WTC11 (cell line): ENCODE measurements at regions of chr1 and their contacts with region 1.

Region 1: DNA sequence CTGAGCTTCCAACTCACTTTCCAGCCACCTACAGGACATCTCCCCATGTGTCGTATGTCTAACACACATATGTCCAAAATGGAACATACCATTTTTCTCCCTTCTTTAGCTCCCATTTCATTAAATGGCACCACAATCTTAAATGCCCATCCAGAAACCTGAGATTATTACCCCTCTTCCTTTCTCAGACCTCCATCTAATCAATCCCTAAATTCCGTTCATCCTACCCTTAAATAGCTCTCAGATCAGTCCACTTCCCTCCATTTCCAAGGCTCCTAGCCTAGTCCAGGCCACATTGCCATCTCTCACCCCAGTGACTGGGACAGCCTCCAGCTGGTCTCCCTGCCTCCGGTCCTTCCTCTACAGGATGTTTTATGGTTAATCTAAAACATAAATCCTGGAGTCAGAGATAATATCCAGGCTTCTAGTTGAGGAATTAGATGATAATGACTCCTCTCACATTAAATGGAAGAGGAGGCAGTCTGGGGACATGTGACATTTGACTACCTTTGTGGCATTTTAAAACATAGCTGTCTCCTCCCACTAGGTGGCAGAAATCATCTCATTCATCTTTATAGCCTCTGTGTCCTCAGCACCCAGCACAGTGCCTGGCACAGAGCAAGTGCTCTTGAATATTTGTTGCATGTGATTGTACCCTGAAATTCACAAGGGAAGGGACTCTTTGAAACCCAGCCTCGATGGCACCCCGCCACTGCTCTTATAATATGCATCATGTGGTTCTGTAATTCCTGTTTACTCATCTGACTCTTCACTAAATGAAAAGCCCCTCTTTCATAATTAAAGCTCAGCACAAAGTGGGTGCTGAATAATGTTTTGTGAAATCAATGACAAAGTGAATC is 102.3 kb downstream of the TMEM53 start:
- DNase-seq: no peak
- ATAC-seq: peak; percentile 46
- H3K4me3 Mint-ChIP-seq: no peak overlapping the region
- H3K27ac Mint-ChIP-seq: no peak overlapping the region
- H3K4me1 Mint-ChIP-seq: peaks cover 22% of the 10 kb centered on the region
- H3K27me3 Mint-ChIP-seq: peaks cover 3% of the 10 kb centered on the region; the same call in 1 of the 2 replicates
- CTCF ChIP-seq: no peak; the same call in 1 of the 2 replicates

Region 2: GRCh38 chr1:44536357-44537209 is 35.4 kb before region 1 on chr1:
- CTCF ChIA-PET with region 1: interaction called, 11 read pairs
- POLR2A ChIA-PET with region 1: no interaction called
- DNase-seq: no peak
- ATAC-seq: peak; percentile 23
- H3K4me3 Mint-ChIP-seq: peak overlapping the region; percentile 29; the same call in 1 of the 2 replicates
- H3K27ac Mint-ChIP-seq: peak overlapping the region; percentile 84
- H3K4me1 Mint-ChIP-seq: peaks cover 78% of the 10 kb centered on the region
- H3K27me3 Mint-ChIP-seq: peaks cover 7% of the 10 kb centered on the region
- CTCF ChIP-seq: no peak

Region 3: DNA sequence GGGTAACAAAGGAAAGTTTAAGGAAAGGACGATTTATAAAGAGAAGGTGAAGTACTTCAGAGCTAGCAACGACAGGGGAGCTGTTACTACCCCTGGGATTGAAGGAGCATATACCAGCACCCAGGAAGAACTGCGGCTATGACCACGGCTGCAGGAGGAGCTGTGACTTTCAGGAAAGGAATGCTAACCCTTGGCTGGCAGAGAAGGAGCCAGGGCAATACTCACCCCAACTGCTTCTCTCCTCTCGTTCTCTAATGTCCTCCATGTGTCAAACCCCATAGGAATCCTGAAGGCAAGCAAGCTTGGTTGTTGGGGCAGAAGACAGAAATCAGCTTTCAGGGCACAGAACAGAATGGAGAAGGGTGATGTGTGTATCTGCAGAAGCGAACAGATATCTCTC is 18.2 kb before region 1 on chr1:
- CTCF ChIA-PET with region 1: interaction called, 19 read pairs
- POLR2A ChIA-PET with region 1: no interaction called
- DNase-seq: no peak
- ATAC-seq: no peak
- H3K4me3 Mint-ChIP-seq: no peak overlapping the region
- H3K27ac Mint-ChIP-seq: no peak overlapping the region
- H3K4me1 Mint-ChIP-seq: peaks cover 37% of the 10 kb centered on the region
- H3K27me3 Mint-ChIP-seq: no peaks in the 10 kb centered on the region
- CTCF ChIP-seq: no peak

Region 4: GRCh38 chr1:44584167-44584566 is 12.2 kb after region 1 on chr1:
- CTCF ChIA-PET with region 1: interaction called, 28 read pairs
- POLR2A ChIA-PET with region 1: no interaction called
- DNase-seq: no peak
- ATAC-seq: peak; percentile 59
- H3K4me3 Mint-ChIP-seq: no peak overlapping the region
- H3K27ac Mint-ChIP-seq: 0 out of 2 replicates have a peak overlapping the region, but pooled peaks have one; percentile 13
- H3K4me1 Mint-ChIP-seq: peaks cover 17% of the 10 kb centered on the region; the same call in 1 of the 2 replicates
- H3K27me3 Mint-ChIP-seq: no peaks in the 10 kb centered on the region
- CTCF ChIP-seq: no peak